Activated CD4-positive, alpha-beta T cell treated with anti-CD3 and anti-CD28 coated beads for 36 hours (primary cell): ENCODE measurements at regions of chr5 and their contacts with region 1.

Region 1: GRCh38 chr5:59126708-59127573 is 544.1 kb downstream of the RAB3C start:
- DNase-seq: no peak
- ATAC-seq: peak; percentile 7
- H3K4me3 Mint-ChIP-seq: no peak overlapping the region
- H3K27ac Mint-ChIP-seq: no peak overlapping the region
- H3K4me1 Mint-ChIP-seq: peaks cover 23% of the 10 kb centered on the region
- H3K27me3 Mint-ChIP-seq: no peaks in the 10 kb centered on the region

Region 2: GRCh38 chr5:59020611-59021285 is 106.2 kb before region 1 on chr5:
- CTCF ChIA-PET with region 1: interaction called, 6 read pairs
- POLR2A ChIA-PET with region 1: interaction called, 5 read pairs
- intact Hi-C with region 1: loop called in 1 of 2 experiments (anchors 5 kb)
- DNase-seq: peak; percentile 70
- ATAC-seq: peak; percentile 94
- H3K4me3 Mint-ChIP-seq: peak overlapping the region; percentile 47
- H3K27ac Mint-ChIP-seq: peak overlapping the region; percentile 94
- H3K4me1 Mint-ChIP-seq: peaks cover 65% of the 10 kb centered on the region
- H3K27me3 Mint-ChIP-seq: no peaks in the 10 kb centered on the region

Region 3: GRCh38 chr5:59099270-59099994 is 27.5 kb before region 1 on chr5:
- CTCF ChIA-PET with region 1: interaction called, 17 read pairs
- POLR2A ChIA-PET with region 1: interaction called, 3 read pairs
- intact Hi-C with region 1: loop called (anchors 1 kb)
- DNase-seq: peak; percentile 64
- ATAC-seq: peak; percentile 96
- H3K4me3 Mint-ChIP-seq: peak overlapping the region; percentile 17
- H3K27ac Mint-ChIP-seq: peak overlapping the region; percentile 79
- H3K4me1 Mint-ChIP-seq: peaks cover 45% of the 10 kb centered on the region
- H3K27me3 Mint-ChIP-seq: peaks cover 2% of the 10 kb centered on the region

Region 4: GRCh38 chr5:59104400-59105127 is 22.4 kb before region 1 on chr5:
- CTCF ChIA-PET with region 1: interaction called, 17 read pairs
- POLR2A ChIA-PET with region 1: interaction called, 3 read pairs
- intact Hi-C with region 1: loop called (anchors 1 kb)
- DNase-seq: no peak
- ATAC-seq: no peak
- H3K4me3 Mint-ChIP-seq: no peak overlapping the region
- H3K27ac Mint-ChIP-seq: no peak overlapping the region
- H3K4me1 Mint-ChIP-seq: peaks cover 31% of the 10 kb centered on the region
- H3K27me3 Mint-ChIP-seq: no peaks in the 10 kb centered on the region

Region 5: DNA sequence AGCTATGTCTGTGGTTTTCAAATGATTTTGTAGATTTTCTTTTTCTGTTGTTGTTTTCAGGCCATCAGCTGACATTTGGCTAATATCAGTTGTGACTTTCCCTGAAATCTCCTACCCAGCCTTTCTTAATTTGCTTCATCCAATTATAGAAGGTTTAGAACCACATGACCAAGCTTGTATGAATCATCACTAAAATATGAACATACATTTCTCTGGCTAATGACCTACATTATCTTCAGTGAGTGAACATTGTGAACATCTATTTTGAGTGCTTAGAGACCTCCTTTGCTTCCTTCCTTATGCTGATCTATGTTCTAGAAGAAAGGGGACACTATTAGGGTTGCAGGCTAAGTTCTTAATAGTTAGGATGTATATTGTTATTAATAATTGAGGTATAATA is 11.6 kb before region 1 on chr5:
- CTCF ChIA-PET with region 1: interaction called, 11 read pairs
- POLR2A ChIA-PET with region 1: no interaction called
- intact Hi-C with region 1: no loop called
- DNase-seq: no peak
- ATAC-seq: no peak
- H3K4me3 Mint-ChIP-seq: no peak overlapping the region
- H3K27ac Mint-ChIP-seq: no peak overlapping the region
- H3K4me1 Mint-ChIP-seq: peaks cover 4% of the 10 kb centered on the region
- H3K27me3 Mint-ChIP-seq: no peaks in the 10 kb centered on the region

Region 6: GRCh38 chr5:59164041-59164830 is 37.3 kb after region 1 on chr5:
- CTCF ChIA-PET with region 1: interaction called, 5 read pairs
- POLR2A ChIA-PET with region 1: interaction called, 3 read pairs
- intact Hi-C with region 1: loop called in 1 of 2 experiments (anchors 1 kb)
- DNase-seq: no peak
- ATAC-seq: no peak
- H3K4me3 Mint-ChIP-seq: no peak overlapping the region
- H3K27ac Mint-ChIP-seq: no peak overlapping the region
- H3K4me1 Mint-ChIP-seq: peaks cover 15% of the 10 kb centered on the region
- H3K27me3 Mint-ChIP-seq: no peaks in the 10 kb centered on the region

Region 7: GRCh38 chr5:59238126-59238902 is 111.4 kb after region 1 on chr5:
- CTCF ChIA-PET with region 1: no interaction called
- POLR2A ChIA-PET with region 1: no interaction called
- intact Hi-C with region 1: loop called in 1 of 2 experiments (anchors 1 kb)
- DNase-seq: peak; percentile 20
- ATAC-seq: peak; percentile 96
- H3K4me3 Mint-ChIP-seq: no peak overlapping the region
- H3K27ac Mint-ChIP-seq: no peak overlapping the region
- H3K4me1 Mint-ChIP-seq: peaks cover 22% of the 10 kb centered on the region
- H3K27me3 Mint-ChIP-seq: peaks cover 45% of the 10 kb centered on the region